ENCODE measurements at regions of chr4 and their contacts with region 1.

Region 1: GRCh38 chr4:106238820-106239420 is 77.1 kb downstream of the TBCK start:
- DNase-seq: peak; percentile 40
- H3K4me3 ChIP-seq: no peak overlapping the region
- H3K27ac ChIP-seq: no peak overlapping the region
- H3K4me1 ChIP-seq: no peaks in the 10 kb centered on the region
- H3K27me3 ChIP-seq: no peaks in the 10 kb centered on the region
- CTCF ChIP-seq: peak; percentile 52 to 57
- POLR2A ChIP-seq: no peak

Region 2: GRCh38 chr4:105509291-105509690 is 729.6 kb before region 1 on chr4:
- CTCF ChIA-PET with region 1: no interaction called
- POLR2A ChIA-PET with region 1: no interaction called
- dilution Hi-C with region 1: no loop called
- intact Hi-C with region 1: no loop called
- DNase-seq: no peak
- H3K4me3 ChIP-seq: no peak overlapping the region
- H3K27ac ChIP-seq: no peak overlapping the region
- H3K4me1 ChIP-seq: no peaks in the 10 kb centered on the region
- H3K27me3 ChIP-seq: no peaks in the 10 kb centered on the region
- CTCF ChIP-seq: no peak
- POLR2A ChIP-seq: no peak

Region 3: GRCh38 chr4:106809076-106809475 is 570.2 kb after region 1 on chr4:
- CTCF ChIA-PET with region 1: interaction called, 6 read pairs
- POLR2A ChIA-PET with region 1: no interaction called
- dilution Hi-C with region 1: no loop called
- intact Hi-C with region 1: loop called (anchors 1 kb)
- DNase-seq: peak; percentile 66
- H3K4me3 ChIP-seq: no peak overlapping the region
- H3K27ac ChIP-seq: no peak overlapping the region
- H3K4me1 ChIP-seq: no peaks in the 10 kb centered on the region
- H3K27me3 ChIP-seq: no peaks in the 10 kb centered on the region
- CTCF ChIP-seq: peak; percentile 27 to 30
- POLR2A ChIP-seq: no peak

Measured in endothelial cell of umbilical vein (primary cell).